Heart right ventricle (tissue), 16 donors: ENCODE measurements at regions of chr13 and their contacts with region 1.

Region 1: DNA sequence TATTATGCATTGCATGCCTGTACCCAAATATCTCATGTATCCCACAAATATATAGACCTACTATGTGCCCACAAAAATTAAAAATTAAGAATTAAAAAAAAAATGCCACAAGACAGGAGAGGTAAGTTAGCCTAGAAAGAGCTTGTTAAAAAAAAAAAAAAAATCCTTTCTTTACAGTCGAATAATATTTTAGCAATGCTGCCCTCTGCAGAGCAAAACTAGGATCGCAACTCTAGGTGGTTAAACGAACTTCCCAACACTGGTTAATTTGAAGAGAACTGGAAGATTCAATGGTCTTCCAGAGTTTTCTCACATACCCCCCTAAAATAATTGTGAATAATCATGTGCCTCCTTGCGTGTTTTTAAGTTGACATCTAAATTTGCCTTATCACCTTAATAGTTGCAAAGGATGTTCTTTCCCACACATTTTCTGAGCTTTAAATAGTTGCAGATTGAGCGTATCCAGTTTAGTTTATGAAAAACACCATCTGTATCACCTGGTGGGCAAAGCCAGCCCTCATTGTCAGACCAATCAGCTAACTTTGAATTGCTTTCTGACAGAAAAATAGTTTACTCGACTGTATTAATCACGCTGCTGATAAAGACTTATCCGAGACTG is 47.4 kb upstream of the RCBTB2 start:
- DNase-seq: peak in 1 of 2 donors; percentile 87
- ATAC-seq: peak in 6 of 8 donors; percentile 45 to 70 (median 49)
- H3K4me3 ChIP-seq: no peak overlapping the region
- H3K27ac ChIP-seq: peak overlapping the region in 3 of 10 donors; percentile 35 to 88 (median 37)
- H3K4me1 ChIP-seq: peaks cover 0 to 51% (median 27%) of the 10 kb centered on the region in 9 donors
- H3K27me3 ChIP-seq: no peaks in the 10 kb centered on the region
- CTCF ChIP-seq: peak; percentile 58 to 87 (median 75)

Region 2: DNA sequence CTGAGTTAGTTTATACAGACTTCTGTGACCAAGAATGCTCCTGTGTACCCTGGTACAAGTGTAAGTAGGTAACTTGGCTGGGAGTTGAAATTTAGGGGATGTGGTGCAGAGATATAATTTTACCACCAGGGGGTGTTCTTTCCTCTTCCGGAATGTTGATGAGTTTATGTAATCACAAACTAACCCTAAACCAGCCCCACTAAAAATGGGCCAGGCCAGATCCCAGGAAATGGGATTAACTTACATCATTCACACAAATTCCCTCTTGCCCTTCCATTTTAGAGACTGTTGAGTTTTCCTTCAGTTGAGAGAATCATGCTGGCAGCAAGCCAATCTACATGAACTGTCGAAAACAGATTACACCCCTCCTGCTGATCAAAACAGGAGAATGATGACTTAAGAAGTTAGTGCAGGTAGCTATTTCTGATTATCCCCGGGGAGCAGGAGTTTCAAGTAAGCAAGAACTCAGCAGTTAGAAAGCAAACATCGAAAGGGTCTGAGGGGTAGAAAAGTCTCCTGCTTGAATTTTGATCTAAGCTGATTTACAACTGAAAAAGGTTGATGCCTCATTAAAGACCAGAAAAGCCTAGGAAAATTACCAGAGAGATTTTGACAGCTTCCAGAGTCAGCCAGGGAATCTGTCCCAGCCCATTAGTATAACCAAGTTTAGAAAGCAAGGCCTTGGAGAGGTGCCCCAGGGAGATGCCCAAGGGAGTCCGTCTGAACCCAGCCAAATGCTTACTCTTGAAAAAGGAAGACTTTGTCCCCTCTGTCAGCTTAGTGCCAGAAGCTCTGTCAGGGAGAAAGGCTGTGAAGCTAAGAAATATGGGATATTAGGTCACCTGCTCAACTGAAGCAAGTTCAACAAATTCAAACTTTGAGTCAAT is 453.1 kb before region 1 on chr13:
- intact Hi-C with region 1: loop called in 5 of 10 experiments (anchors 10 kb)
- DNase-seq: peak; percentile 76 to 81
- ATAC-seq: peak; percentile 71 to 90 (median 82)
- H3K4me3 ChIP-seq: peak overlapping the region in 2 of 10 donors; percentile 6 to 14
- H3K27ac ChIP-seq: peak overlapping the region; percentile 73 to 94 (median 84)
- H3K4me1 ChIP-seq: peaks cover 13 to 56% (median 45%) of the 10 kb centered on the region in 9 donors
- H3K27me3 ChIP-seq: no peaks in the 10 kb centered on the region
- CTCF ChIP-seq: peak; percentile 64 to 84 (median 74)

Region 3: DNA sequence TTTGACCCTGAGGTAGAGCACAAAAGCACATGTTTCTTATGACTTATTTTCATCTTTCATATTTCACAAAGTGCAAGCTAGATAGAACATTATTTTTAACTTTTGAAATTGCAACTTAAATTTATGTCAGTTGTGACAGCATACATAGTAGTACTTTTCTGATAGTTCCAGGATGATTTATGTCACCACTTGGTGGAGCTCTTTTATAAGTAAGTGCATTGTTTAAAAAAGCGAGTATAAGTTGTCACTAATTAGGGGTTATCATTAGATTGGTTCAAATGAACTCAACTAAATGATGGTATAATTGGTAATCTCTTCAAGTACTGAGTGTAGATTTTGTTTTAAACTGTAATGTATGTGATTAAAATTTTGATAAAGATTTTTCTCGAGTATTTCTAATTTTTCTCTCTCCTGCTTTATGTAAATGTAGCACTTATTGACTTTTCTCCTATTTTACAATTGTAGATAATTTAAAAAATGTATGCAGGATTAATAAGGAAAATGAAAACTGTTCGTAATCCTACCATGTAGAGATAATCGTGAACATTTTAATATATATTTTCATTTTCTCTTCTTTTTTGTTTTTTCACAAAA is 245.7 kb before region 1 on chr13:
- intact Hi-C with region 1: loop called (anchors 1 to 10 kb)
- DNase-seq: no peak
- ATAC-seq: peak in 7 of 8 donors; percentile 41 to 83 (median 73)
- H3K4me3 ChIP-seq: no peak overlapping the region
- H3K27ac ChIP-seq: no peak overlapping the region
- H3K4me1 ChIP-seq: peaks cover 0 to 27% (median 6%) of the 10 kb centered on the region in 9 donors
- H3K27me3 ChIP-seq: no peaks in the 10 kb centered on the region
- CTCF ChIP-seq: peak; percentile 31 to 85 (median 70)

Region 4: DNA sequence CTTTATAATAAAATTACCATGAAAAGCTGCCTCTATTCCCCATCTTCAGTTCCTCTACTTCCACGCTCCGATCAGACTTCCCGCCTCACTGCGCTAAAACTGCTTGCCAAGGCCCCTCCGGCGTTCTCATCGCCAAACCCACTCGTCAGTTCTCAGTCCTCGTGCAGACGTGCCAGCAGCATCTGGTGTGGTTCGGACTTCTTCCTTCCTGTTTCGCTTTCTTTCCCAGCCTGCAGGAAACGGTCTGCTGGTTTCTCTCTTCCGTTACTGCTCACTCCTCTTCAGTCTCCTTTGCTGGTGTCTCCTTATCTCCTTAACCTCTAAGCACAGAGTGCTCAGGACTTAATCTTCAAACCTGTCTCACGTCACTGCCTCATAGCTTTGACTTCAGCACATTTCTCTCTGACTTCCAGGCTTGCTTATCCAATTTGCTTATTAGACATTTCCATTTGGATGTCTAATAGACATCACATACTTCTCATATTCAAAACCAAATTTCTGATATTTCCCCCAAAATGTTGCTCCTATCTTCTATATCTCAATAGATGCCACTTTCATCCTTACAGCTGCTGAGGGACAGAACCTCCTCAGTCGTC is 87.7 kb before region 1 on chr13:
- intact Hi-C with region 1: loop called in 1 of 10 experiments (anchors 10 kb)
- DNase-seq: peak; percentile 79 to 88
- ATAC-seq: peak; percentile 90 to 95 (median 93)
- H3K4me3 ChIP-seq: peak overlapping the region in 9 of 10 donors; percentile 12 to 51 (median 38)
- H3K27ac ChIP-seq: peak overlapping the region; percentile 24 to 90 (median 74)
- H3K4me1 ChIP-seq: peaks cover 0 to 80% (median 37%) of the 10 kb centered on the region in 9 donors
- H3K27me3 ChIP-seq: no peaks in the 10 kb centered on the region
- CTCF ChIP-seq: no peak

Region 5: DNA sequence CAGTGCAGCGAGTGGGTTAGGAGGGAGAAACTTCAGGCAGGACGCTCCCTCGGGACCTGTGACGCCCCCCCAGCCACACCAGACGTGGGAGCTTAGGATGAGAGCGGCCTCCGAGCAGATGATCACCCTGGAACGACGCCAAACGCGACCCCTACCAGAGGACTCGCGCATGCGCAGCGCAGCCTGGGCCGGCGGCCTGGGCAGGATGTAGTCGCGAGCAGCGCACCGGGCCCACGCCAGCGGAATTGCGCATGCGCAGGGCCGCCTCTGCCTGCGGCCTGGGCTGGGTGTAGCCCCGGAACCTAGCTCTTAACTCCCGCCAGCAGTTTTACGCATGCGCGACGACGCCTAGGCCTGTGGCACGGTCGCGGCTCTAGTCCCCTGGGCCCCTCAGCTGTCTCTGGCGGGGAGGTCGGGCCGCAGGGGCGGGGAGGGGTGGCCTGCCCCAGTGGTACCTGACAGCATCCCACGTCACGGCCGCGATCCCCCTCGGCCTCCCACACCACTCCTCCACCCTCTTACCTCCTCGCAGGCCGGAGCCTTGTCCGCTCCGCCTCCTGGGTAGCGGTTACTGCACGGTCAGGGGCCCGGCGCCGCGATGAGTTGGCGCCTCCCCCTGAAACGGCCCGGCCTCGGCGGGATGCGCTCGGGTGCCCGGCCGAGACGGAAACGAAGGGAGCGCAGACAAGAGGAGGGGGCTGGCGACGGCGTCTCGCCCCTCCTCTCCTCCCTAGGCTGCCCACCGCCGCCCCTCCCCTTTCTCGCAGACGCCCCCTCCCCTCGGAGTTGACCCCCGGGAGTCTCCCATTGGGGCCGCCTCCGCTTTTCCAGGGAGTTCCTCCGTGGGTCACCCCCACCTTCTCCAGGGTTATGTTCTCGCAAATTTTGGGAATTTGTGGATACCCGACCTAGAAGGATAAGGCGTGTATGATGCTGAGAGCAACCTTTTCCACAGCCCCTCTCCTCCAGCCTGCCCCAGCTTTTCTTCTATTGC is 47.5 kb before region 1 on chr13 and contains the start of gene RCBTB2:
- intact Hi-C with region 1: loop called in 2 of 10 experiments (anchors 5 kb)
- DNase-seq: peak; percentile 98 to 100
- ATAC-seq: peak; percentile 96 to 99 (median 98)
- H3K4me3 ChIP-seq: peak within 1 kb of the TSS; percentile 59 to 76 (median 74)
- H3K27ac ChIP-seq: peak within 1 kb of the TSS; percentile 97 to 99 (median 98)
- H3K4me1 ChIP-seq: peaks cover 3 to 58% (median 34%) of the 10 kb centered on the region in 9 donors
- H3K27me3 ChIP-seq: no peaks in the 10 kb centered on the region
- CTCF ChIP-seq: peak in 2 of 9 donors; percentile 9 to 16
- total RNA-seq, gene RCBTB2: 8.3 to 16.2 (median 12.2) TPM

Region 6: DNA sequence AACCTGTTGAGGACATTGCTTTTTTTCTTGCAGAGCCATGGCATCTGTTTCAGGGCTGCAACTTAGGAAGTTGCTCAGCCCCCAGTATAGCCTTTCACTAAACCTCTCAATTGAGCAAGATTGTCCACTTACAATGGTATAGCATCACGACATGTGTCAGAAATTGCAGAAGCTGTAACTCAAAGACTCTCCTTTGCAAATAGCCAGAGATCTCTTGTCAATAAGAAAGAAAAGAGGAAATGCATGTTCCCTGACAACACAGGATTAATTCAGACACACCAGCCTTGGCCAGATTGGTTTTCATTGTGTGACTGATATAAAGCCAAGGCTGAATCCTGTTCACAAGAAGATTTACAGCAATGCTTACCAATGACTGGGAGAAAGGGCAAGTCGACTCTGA is 34.8 kb after region 1 on chr13:
- intact Hi-C with region 1: no loop called
- DNase-seq: no peak
- ATAC-seq: no peak
- H3K4me3 ChIP-seq: no peak overlapping the region
- H3K27ac ChIP-seq: no peak overlapping the region
- H3K4me1 ChIP-seq: no peaks in the 10 kb centered on the region
- H3K27me3 ChIP-seq: no peaks in the 10 kb centered on the region
- CTCF ChIP-seq: no peak